ENCODE measurements at regions of chr16 and their contacts with region 1.

Region 1: DNA sequence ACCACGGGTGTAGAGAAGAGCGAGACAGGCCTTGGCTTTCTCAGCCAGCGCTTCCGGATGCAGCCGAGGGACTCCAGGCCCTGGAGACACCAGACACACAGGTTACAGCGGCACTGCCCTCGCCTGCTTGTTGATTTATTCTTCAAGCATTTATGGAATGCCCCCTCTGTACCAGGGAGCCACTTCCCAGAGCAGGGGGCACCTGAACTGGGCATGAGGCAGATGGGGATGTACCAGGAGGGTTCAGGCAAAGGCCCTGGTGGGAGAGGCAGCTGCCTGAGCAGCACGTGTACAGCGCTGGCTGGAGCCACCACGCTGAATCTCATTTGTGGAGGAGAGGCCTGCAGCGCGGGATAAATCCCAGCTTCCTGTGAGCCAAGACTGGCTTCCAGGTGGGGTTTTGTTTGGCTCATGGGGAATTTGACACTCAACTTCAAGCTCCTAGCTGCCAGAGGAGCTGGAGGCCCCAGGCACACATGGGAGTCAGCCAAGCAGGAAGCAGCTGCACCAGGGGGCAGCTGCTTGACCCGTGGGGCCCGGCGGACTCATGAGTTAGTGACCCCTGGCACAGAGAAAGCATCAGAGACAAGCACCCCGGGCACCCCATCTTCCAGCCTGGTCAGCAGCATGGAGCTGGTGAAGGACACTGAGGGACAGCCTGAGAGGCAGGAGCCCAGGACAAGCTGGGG is 59.7 kb downstream of the IL21R start:
- DNase-seq: no peak
- H3K4me3 Mint-ChIP-seq: no peak overlapping the region
- H3K27ac Mint-ChIP-seq: no peak overlapping the region
- H3K4me1 Mint-ChIP-seq: peaks cover 9% of the 10 kb centered on the region
- H3K27me3 Mint-ChIP-seq: no peaks in the 10 kb centered on the region

Region 2: GRCh38 chr16:27109666-27110523 is 351.7 kb before region 1 on chr16:
- intact Hi-C with region 1: loop called (anchors 1 kb)
- DNase-seq: peak; percentile 71
- H3K4me3 Mint-ChIP-seq: peak overlapping the region; percentile 69
- H3K27ac Mint-ChIP-seq: no peak overlapping the region
- H3K4me1 Mint-ChIP-seq: peaks cover 4% of the 10 kb centered on the region
- H3K27me3 Mint-ChIP-seq: peaks cover 10% of the 10 kb centered on the region

Region 3: DNA sequence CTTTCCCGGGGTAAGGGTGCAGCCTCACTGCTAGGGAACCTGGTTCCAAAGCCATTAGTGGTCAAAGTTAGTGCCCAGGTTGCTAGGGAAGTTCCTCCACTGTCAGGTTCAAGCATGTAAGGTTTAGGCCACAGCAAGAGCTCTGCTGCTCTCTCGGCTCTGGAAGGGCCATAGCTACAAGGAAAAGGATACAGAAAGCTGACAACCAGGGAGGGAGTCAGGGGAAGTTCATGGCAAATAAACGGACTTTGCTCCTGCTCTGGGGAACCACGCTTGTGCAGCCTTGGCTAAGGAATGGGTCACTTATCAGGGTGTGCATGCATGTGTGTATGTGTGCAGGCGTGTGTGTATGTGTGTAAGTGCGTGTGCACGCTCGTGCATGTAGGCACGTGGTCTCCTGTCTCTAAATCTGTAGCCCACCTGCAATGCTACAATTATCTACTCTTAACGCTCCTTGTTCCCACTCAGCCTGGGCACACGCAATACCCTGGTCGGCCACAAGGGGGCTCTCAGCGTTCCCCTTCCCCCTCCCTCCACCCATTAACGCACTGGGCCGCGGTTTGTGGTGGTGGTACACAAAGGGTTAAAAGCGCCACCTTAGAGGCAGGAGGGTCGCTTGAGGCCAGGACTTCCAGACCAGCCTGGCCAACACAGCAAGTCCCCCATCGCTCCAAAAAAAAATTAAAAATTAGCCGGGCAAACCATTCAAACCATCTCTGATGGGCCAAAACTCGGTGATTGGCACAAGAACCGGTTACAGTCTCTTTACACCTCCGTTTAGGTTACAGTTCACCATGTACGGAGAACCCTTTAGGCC is 306.7 kb before region 1 on chr16:
- intact Hi-C with region 1: loop called (anchors 1 kb)
- DNase-seq: peak; percentile 53
- H3K4me3 Mint-ChIP-seq: no peak overlapping the region
- H3K27ac Mint-ChIP-seq: no peak overlapping the region
- H3K4me1 Mint-ChIP-seq: peaks cover 10% of the 10 kb centered on the region
- H3K27me3 Mint-ChIP-seq: no peaks in the 10 kb centered on the region

Region 4: GRCh38 chr16:27779641-27780164 is 318.1 kb after region 1 on chr16:
- intact Hi-C with region 1: no loop called
- DNase-seq: no peak
- H3K4me3 Mint-ChIP-seq: no peak overlapping the region
- H3K27ac Mint-ChIP-seq: no peak overlapping the region
- H3K4me1 Mint-ChIP-seq: no peaks in the 10 kb centered on the region
- H3K27me3 Mint-ChIP-seq: no peaks in the 10 kb centered on the region

Region 5: DNA sequence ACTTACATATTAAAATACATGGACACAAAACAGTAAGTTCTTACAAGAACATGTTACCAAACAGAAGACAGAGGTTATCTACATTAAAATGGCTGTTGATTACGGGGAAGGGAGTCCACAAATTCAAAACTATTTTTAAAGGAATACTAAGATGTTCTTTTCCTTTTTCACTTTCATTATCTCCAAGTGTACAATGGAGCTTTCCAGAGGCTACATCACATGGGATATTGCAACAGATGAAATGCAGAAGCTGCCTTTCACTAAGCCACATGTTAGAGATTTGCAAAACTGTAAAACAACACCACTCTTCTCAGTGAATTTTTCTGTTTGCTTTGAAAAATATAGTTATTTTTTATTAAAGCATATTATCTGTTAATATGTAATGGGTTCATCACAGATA is 696.5 kb after region 1 on chr16:
- intact Hi-C with region 1: no loop called
- DNase-seq: no peak
- H3K4me3 Mint-ChIP-seq: no peak overlapping the region
- H3K27ac Mint-ChIP-seq: no peak overlapping the region
- H3K4me1 Mint-ChIP-seq: peaks cover 50% of the 10 kb centered on the region
- H3K27me3 Mint-ChIP-seq: no peaks in the 10 kb centered on the region

Measured in activated T-helper 2 cell treated with anti-CD3 and anti-CD28 coated beads, Interferon-gamma antibody, Interleukin-2, Interleukin-4, amounts not matched to agents 10 μg/mL and 5 μg/mL and 100 μg/mL, durations not matched to agents 14 hours and 24 hours and 36 hours (primary cell).